ENCODE measurements at regions of chr11 and their contacts with region 1.

Region 1: DNA sequence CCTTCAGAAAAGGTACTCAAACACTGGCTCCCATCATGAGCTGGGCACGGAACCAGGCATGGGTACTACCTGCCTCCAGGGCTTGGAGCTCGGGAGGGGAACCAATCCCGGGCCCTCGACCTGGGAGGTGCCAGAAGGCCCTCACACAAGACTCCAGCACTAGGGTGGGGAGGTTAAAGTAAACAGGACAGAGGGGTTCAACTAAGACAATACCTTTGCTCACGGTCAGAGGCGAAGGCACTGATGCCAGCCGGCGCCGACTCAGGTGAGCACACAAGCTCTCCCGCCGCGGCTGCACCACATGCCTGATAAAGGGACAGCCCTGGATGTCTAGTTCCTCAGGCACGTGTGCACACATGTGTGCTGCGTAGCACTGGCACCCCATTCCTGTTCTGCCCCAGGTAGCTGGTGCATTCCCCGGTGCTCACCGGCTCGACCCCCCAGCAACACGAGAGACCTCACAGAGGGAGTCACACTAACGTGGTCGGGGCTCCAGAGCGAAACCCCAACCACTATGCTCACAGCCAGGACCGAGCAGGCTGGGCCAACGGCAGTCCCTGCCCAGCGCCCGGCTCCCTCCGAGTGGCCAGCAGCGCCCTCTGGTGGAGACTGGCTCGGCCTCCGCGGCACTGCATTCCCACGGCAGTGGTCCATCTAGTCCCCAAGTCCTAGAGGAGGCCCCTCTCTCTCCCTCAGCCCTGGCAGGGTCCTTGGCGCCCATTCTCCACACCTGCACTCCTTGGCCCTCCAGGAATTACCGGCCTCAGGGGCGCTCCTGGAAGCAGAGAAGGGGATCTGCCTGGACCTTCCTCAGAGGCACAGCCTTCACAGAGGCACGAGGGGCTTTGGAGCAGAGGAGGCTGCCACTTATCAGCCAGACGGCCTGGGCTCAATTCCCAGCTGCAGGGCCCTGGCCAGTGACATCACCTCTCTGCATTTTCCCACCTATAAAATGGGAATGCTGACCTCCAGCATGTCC is 28.8 kb upstream of the MOB2 start:
- DNase-seq: peak; percentile 82
- H3K4me3 ChIP-seq: no peak overlapping the region
- H3K27ac ChIP-seq: no peak overlapping the region
- H3K4me1 ChIP-seq: peaks cover 9 to 33% (median 15%) of the 10 kb centered on the region in 4 donors
- H3K27me3 ChIP-seq: no peaks in the 10 kb centered on the region
- CTCF ChIP-seq: peak; percentile 90 to 95 (median 93)
- EP300 ChIP-seq: no peak
- POLR2A ChIP-seq: no peak

Region 2: GRCh38 chr11:898143-898511 is 617.2 kb before region 1 on chr11:
- in situ Hi-C with region 1: loop called in 1 of 4 experiments (anchors 25 kb)
- intact Hi-C with region 1: no loop called
- DNase-seq: no peak
- H3K4me3 ChIP-seq: no peak overlapping the region
- H3K27ac ChIP-seq: peak overlapping the region in 1 of 4 donors; percentile 21
- H3K4me1 ChIP-seq: peaks cover 0 to 4% (median 0%) of the 10 kb centered on the region in 4 donors
- H3K27me3 ChIP-seq: no peaks in the 10 kb centered on the region
- CTCF ChIP-seq: no peak
- EP300 ChIP-seq: no peak
- POLR2A ChIP-seq: no peak

Region 3: DNA sequence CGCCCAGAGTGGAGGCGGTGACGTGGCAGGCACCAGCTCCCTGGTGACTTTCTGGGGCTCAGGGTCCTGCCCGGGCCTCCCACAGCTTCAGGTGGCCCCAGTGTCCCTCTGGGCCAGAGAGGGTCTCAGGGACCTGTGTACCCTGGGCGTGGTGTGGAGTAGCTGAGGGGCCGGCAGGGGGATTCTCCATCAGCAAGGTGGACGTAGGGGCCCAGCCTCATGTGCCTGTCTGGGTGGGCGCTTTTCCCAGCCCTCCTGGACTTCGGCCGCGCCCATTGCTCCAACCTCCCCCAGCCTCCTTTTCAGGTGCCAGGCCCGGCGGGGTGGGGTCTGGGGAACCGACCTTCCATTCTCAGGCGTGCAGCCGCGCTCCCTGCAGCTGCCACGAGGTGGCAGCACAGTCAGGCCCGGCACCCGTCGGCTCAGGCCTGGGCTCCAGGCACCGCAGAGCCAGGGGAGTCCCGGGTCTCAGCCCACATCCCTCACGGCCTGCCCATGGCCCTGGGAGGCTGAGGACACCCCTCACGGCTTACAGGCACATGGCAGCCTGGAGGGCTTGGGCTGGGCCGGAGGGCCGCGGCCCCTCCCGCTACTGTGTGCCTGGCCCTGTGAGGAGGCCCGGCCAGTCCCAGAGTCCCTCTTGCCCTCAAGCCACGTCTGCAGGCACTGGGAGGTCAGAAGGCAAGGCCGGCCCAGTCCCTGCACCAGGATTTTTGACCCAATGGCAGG is 312.4 kb before region 1 on chr11:
- in situ Hi-C with region 1: loop called in 2 of 4 experiments (anchors 25 kb)
- intact Hi-C with region 1: loop called (anchors 5 kb)
- DNase-seq: peak; percentile 69
- H3K4me3 ChIP-seq: no peak overlapping the region
- H3K27ac ChIP-seq: peak overlapping the region in 1 of 4 donors; percentile 14
- H3K4me1 ChIP-seq: peaks cover 10 to 26% (median 21%) of the 10 kb centered on the region in 4 donors
- H3K27me3 ChIP-seq: peaks cover 32% of the 10 kb centered on the region
- CTCF ChIP-seq: peak; percentile 87 to 97 (median 95)
- EP300 ChIP-seq: no peak
- POLR2A ChIP-seq: no peak

Region 4: DNA sequence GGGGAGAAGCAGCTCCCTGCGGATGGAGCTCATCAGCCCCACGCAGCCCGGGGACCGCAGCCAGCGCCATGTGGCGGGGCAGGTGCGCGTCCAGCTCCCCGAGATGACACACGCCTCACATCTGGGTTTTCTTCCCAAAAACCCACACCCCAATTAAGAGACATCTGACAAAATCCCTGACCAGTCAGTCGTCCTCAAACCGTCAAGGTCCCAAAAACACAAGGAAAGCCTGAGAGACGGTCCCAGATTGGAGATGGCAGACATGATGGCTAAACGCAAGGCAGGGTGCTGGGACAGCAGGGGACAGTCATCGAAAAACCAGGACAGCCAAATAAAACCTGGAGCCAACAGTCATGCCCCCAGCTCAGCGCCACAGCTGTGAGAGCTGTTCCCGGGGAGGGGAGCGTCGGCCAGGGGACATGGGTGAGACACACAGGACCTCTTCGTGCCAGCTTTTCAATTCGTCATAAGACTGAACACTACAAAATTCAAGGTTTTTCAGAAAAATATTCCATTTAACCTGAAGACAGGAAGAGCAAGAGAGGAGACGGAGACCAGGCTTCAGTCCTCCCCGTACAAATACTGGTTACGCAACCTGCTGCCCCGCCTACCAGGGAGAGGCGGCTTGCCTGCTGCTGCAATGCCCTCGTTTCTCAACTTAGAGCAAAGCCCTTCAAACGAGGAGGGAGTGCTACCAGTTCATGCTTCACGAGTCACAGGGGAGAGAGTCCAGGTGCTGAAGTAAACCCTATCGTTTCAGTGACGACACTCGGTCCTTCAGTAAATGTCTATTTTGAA is 216.5 kb before region 1 on chr11:
- in situ Hi-C with region 1: loop called in 3 of 4 experiments (anchors 25 kb)
- intact Hi-C with region 1: loop called (anchors 10 kb)
- DNase-seq: peak; percentile 89
- H3K4me3 ChIP-seq: no peak overlapping the region
- H3K27ac ChIP-seq: peak overlapping the region; percentile 21 to 60 (median 33)
- H3K4me1 ChIP-seq: peaks cover 41 to 57% (median 42%) of the 10 kb centered on the region in 4 donors
- H3K27me3 ChIP-seq: no peaks in the 10 kb centered on the region
- CTCF ChIP-seq: no peak
- EP300 ChIP-seq: no peak
- POLR2A ChIP-seq: no peak

Region 5: GRCh38 chr11:1309498-1310317 is 205.7 kb before region 1 on chr11 and contains the start of gene TOLLIP:
- in situ Hi-C with region 1: no loop called
- intact Hi-C with region 1: loop called (anchors 10 kb)
- DNase-seq: peak; percentile 97
- H3K4me3 ChIP-seq: peak within 1 kb of the TSS; percentile 63 to 94 (median 88)
- H3K27ac ChIP-seq: peak within 1 kb of the TSS; percentile 93 to 96 (median 94)
- H3K4me1 ChIP-seq: peaks cover 15 to 53% (median 46%) of the 10 kb centered on the region in 4 donors
- H3K27me3 ChIP-seq: no peaks in the 10 kb centered on the region
- CTCF ChIP-seq: peak in 2 of 5 experiments; percentile 4 to 33
- EP300 ChIP-seq: no peak
- POLR2A ChIP-seq: peak; percentile 73
- total RNA-seq, gene TOLLIP: 25.9 to 132 (median 50.4) TPM

Region 6: GRCh38 chr11:1453611-1454034 is 61.7 kb before region 1 on chr11:
- in situ Hi-C with region 1: no loop called
- intact Hi-C with region 1: loop called (anchors 5 kb)
- DNase-seq: peak; percentile 66
- H3K4me3 ChIP-seq: no peak overlapping the region
- H3K27ac ChIP-seq: peak overlapping the region in 1 of 4 donors; percentile 17
- H3K4me1 ChIP-seq: peaks cover 6 to 12% (median 8%) of the 10 kb centered on the region in 4 donors
- H3K27me3 ChIP-seq: peaks cover 35% of the 10 kb centered on the region
- CTCF ChIP-seq: peak in 4 of 5 experiments; percentile 20 to 29 (median 26)
- EP300 ChIP-seq: no peak
- POLR2A ChIP-seq: no peak

Region 7: GRCh38 chr11:2498750-2499149 is 983.4 kb after region 1 on chr11:
- in situ Hi-C with region 1: no loop called
- intact Hi-C with region 1: no loop called
- DNase-seq: no peak
- H3K4me3 ChIP-seq: no peak overlapping the region
- H3K27ac ChIP-seq: no peak overlapping the region
- H3K4me1 ChIP-seq: no peaks in the 10 kb centered on the region
- H3K27me3 ChIP-seq: no peaks in the 10 kb centered on the region
- CTCF ChIP-seq: no peak
- EP300 ChIP-seq: no peak
- POLR2A ChIP-seq: no peak